H1 (cell line): ENCODE measurements at regions of chr7 and their contacts with region 1.

Region 1: GRCh38 chr7:117119192-117119924 is 166.1 kb downstream of the ST7 start:
- DNase-seq: peak; percentile 19 to 89
- H3K4me3 ChIP-seq: peak overlapping the region in 1 of 4 experiments; percentile 43; a peak in 2 of 8 replicates
- H3K27ac ChIP-seq: no peak overlapping the region
- H3K4me1 ChIP-seq: peaks cover 0 to 5% (median 2%) of the 10 kb centered on the region in 4 experiments; a peak in 2 of 7 replicates
- H3K27me3 ChIP-seq: no peaks in the 10 kb centered on the region
- CTCF ChIP-seq: peak in 2 of 3 experiments; percentile 76 to 84; a peak in 3 of 4 replicates
- EP300 ChIP-seq: no peak
- POLR2A ChIP-seq: no peak
- RAD21 ChIP-seq: peak; percentile 94

Region 2: DNA sequence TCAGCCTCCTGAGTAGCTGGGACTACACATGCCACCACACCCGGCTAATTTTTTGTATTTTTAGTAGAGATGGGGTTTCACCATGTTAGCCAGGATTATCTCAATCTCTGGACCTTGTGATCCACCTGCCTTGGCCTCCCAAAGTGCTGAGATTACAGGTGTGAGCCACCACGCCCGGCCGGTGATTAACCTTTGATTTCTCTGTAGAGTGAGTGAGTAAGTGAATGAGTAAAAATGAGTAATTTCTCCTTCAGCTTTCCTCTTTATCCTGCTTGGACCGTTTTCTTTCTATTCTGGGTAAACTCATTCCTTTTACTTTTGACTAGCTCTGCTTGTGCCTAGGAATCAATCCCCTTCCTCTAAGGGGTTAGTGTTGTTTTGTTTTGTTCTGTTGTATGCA is 129.3 kb before region 1 on chr7:
- CTCF ChIA-PET with region 1: interaction called, 21 read pairs
- POLR2A ChIA-PET with region 1: no interaction called
- DNase-seq: no peak
- H3K4me3 ChIP-seq: no peak overlapping the region
- H3K27ac ChIP-seq: no peak overlapping the region
- H3K4me1 ChIP-seq: no peaks in the 10 kb centered on the region
- H3K27me3 ChIP-seq: no peaks in the 10 kb centered on the region
- CTCF ChIP-seq: no peak
- EP300 ChIP-seq: no peak
- POLR2A ChIP-seq: no peak
- RAD21 ChIP-seq: no peak

Region 3: DNA sequence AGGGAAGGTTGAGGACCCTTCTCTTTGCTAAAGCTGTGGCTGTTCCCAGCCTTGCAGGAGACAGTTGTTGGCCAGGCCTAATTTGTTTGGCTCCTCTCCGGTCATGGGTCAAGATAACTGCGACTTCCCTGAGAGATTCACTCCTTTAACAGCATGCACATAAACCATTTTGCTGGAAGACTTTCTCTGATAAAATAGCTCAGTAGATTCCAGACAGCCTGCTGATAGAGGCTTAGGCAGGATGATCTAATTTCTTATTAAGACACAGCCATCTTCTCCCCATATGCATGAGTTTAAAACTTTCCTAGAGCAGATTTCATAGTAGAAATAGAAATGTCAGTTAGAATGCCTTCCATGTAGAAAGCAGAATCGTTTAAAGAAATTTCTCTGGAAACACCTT is 21.6 kb after region 1 on chr7:
- CTCF ChIA-PET with region 1: interaction called, 11 read pairs
- POLR2A ChIA-PET with region 1: no interaction called
- DNase-seq: no peak
- H3K4me3 ChIP-seq: no peak overlapping the region
- H3K27ac ChIP-seq: no peak overlapping the region
- H3K4me1 ChIP-seq: peaks cover 2 to 17% (median 11%) of the 10 kb centered on the region in 4 experiments; a peak in 4 of 7 replicates
- H3K27me3 ChIP-seq: no peaks in the 10 kb centered on the region
- CTCF ChIP-seq: no peak
- EP300 ChIP-seq: no peak
- POLR2A ChIP-seq: no peak
- RAD21 ChIP-seq: no peak

Region 4: GRCh38 chr7:117186218-117187010 is 67.1 kb after region 1 on chr7:
- CTCF ChIA-PET with region 1: no interaction called
- POLR2A ChIA-PET with region 1: no interaction called
- DNase-seq: no peak
- H3K4me3 ChIP-seq: no peak overlapping the region
- H3K27ac ChIP-seq: no peak overlapping the region
- H3K4me1 ChIP-seq: no peaks in the 10 kb centered on the region
- H3K27me3 ChIP-seq: no peaks in the 10 kb centered on the region
- CTCF ChIP-seq: no peak
- EP300 ChIP-seq: no peak
- POLR2A ChIP-seq: no peak
- RAD21 ChIP-seq: no peak